Activated naive CD4-positive, alpha-beta T cell treated with anti-CD3 and anti-CD28 coated beads for 36 hours (primary cell): ENCODE measurements at regions of chr18 and their contacts with region 1.

Region 1: GRCh38 chr18:62425465-62426195 is 97.2 kb upstream of the ZCCHC2 start:
- DNase-seq: peak; percentile 80
- H3K4me3 Mint-ChIP-seq: peak overlapping the region; percentile 3
- H3K27ac Mint-ChIP-seq: peak overlapping the region; percentile 19
- H3K4me1 Mint-ChIP-seq: peaks cover 22% of the 10 kb centered on the region
- H3K27me3 Mint-ChIP-seq: no peaks in the 10 kb centered on the region

Region 2: GRCh38 chr18:61471942-61472341 is 953.7 kb before region 1 on chr18:
- CTCF ChIA-PET with region 1: no interaction called
- intact Hi-C with region 1: no loop called
- DNase-seq: no peak
- H3K4me3 Mint-ChIP-seq: no peak overlapping the region
- H3K27ac Mint-ChIP-seq: no peak overlapping the region
- H3K4me1 Mint-ChIP-seq: no peaks in the 10 kb centered on the region
- H3K27me3 Mint-ChIP-seq: no peaks in the 10 kb centered on the region

Region 3: GRCh38 chr18:62288665-62289008 is 137.0 kb before region 1 on chr18:
- CTCF ChIA-PET with region 1: no interaction called
- intact Hi-C with region 1: loop called (anchors 1 kb)
- DNase-seq: no peak
- H3K4me3 Mint-ChIP-seq: no peak overlapping the region
- H3K27ac Mint-ChIP-seq: no peak overlapping the region
- H3K4me1 Mint-ChIP-seq: peaks cover 32% of the 10 kb centered on the region
- H3K27me3 Mint-ChIP-seq: no peaks in the 10 kb centered on the region

Region 4: GRCh38 chr18:62437235-62438017 is 11.8 kb after region 1 on chr18:
- CTCF ChIA-PET with region 1: interaction called, 10 read pairs
- intact Hi-C with region 1: no loop called
- DNase-seq: no peak
- H3K4me3 Mint-ChIP-seq: no peak overlapping the region
- H3K27ac Mint-ChIP-seq: peak overlapping the region; percentile 15
- H3K4me1 Mint-ChIP-seq: no peaks in the 10 kb centered on the region
- H3K27me3 Mint-ChIP-seq: peaks cover 6% of the 10 kb centered on the region

Region 5: GRCh38 chr18:62566199-62566598 is 140.6 kb after region 1 on chr18:
- CTCF ChIA-PET with region 1: interaction called, 11 read pairs
- intact Hi-C with region 1: no loop called
- DNase-seq: peak; percentile 34
- H3K4me3 Mint-ChIP-seq: no peak overlapping the region
- H3K27ac Mint-ChIP-seq: no peak overlapping the region
- H3K4me1 Mint-ChIP-seq: peaks cover 2% of the 10 kb centered on the region
- H3K27me3 Mint-ChIP-seq: no peaks in the 10 kb centered on the region

Region 6: GRCh38 chr18:62957885-62958472 is 532.3 kb after region 1 on chr18:
- CTCF ChIA-PET with region 1: interaction called, 3 read pairs
- intact Hi-C with region 1: loop called (anchors 5 kb)
- DNase-seq: peak; percentile 74
- H3K4me3 Mint-ChIP-seq: no peak overlapping the region
- H3K27ac Mint-ChIP-seq: no peak overlapping the region
- H3K4me1 Mint-ChIP-seq: peaks cover 12% of the 10 kb centered on the region
- H3K27me3 Mint-ChIP-seq: no peaks in the 10 kb centered on the region

Region 7: GRCh38 chr18:63111671-63112402 is 686.2 kb after region 1 on chr18:
- CTCF ChIA-PET with region 1: no interaction called
- intact Hi-C with region 1: no loop called
- DNase-seq: no peak
- H3K4me3 Mint-ChIP-seq: no peak overlapping the region
- H3K27ac Mint-ChIP-seq: no peak overlapping the region
- H3K4me1 Mint-ChIP-seq: peaks cover 16% of the 10 kb centered on the region
- H3K27me3 Mint-ChIP-seq: no peaks in the 10 kb centered on the region

Region 8: GRCh38 chr18:63949068-63949737 is 1523.6 kb after region 1 on chr18 and contains the start of gene HMSD:
- CTCF ChIA-PET with region 1: no interaction called
- intact Hi-C with region 1: loop called (anchors 2 kb)
- DNase-seq: peak; percentile 89
- H3K4me3 Mint-ChIP-seq: peak within 1 kb of the TSS; percentile 82
- H3K27ac Mint-ChIP-seq: peak within 1 kb of the TSS; percentile 86
- H3K4me1 Mint-ChIP-seq: peaks cover 43% of the 10 kb centered on the region
- H3K27me3 Mint-ChIP-seq: peaks cover 26% of the 10 kb centered on the region
- total RNA-seq, gene HMSD: 25.0 to 31.7 TPM